ENCODE measurements at regions of chr11 and their contacts with region 1.

Region 1: GRCh38 chr11:86360775-86361395 is 13.8 kb upstream of the CCDC81 start:
- DNase-seq: peak; percentile 24
- H3K4me3 ChIP-seq: no peak overlapping the region
- H3K27ac ChIP-seq: no peak overlapping the region
- H3K27me3 ChIP-seq: no peaks in the 10 kb centered on the region
- CTCF ChIP-seq: peak; percentile 62

Region 2: GRCh38 chr11:86383041-86383955 is 22.4 kb after region 1 on chr11:
- CTCF ChIA-PET with region 1: interaction called, 10 read pairs
- POLR2A ChIA-PET with region 1: no interaction called
- DNase-seq: no peak
- H3K4me3 ChIP-seq: no peak overlapping the region
- H3K27ac ChIP-seq: no peak overlapping the region
- H3K27me3 ChIP-seq: no peaks in the 10 kb centered on the region
- CTCF ChIP-seq: no peak

Region 3: GRCh38 chr11:86395061-86395551 is 34.2 kb after region 1 on chr11:
- CTCF ChIA-PET with region 1: interaction called, 11 read pairs
- POLR2A ChIA-PET with region 1: no interaction called
- DNase-seq: no peak
- H3K4me3 ChIP-seq: no peak overlapping the region
- H3K27ac ChIP-seq: peak overlapping the region; percentile 53
- H3K27me3 ChIP-seq: no peaks in the 10 kb centered on the region
- CTCF ChIP-seq: no peak

Region 4: GRCh38 chr11:86418917-86419316 is 58.0 kb after region 1 on chr11:
- CTCF ChIA-PET with region 1: interaction called, 27 read pairs
- POLR2A ChIA-PET with region 1: no interaction called
- DNase-seq: no peak
- H3K4me3 ChIP-seq: no peak overlapping the region
- H3K27ac ChIP-seq: no peak overlapping the region
- H3K27me3 ChIP-seq: no peaks in the 10 kb centered on the region
- CTCF ChIP-seq: peak; percentile 42

Region 5: GRCh38 chr11:86811637-86812321 is 450.9 kb after region 1 on chr11:
- CTCF ChIA-PET with region 1: interaction called, 10 read pairs
- POLR2A ChIA-PET with region 1: interaction called, 3 read pairs
- DNase-seq: peak; percentile 47
- H3K4me3 ChIP-seq: no peak overlapping the region
- H3K27ac ChIP-seq: no peak overlapping the region
- H3K27me3 ChIP-seq: no peaks in the 10 kb centered on the region
- CTCF ChIP-seq: no peak

Measured in AG04450 (cell line).